BJ (cell line): ENCODE measurements at regions of chr2 and their contacts with region 1.

Region 1: GRCh38 chr2:74334931-74335333 is 8.3 kb downstream of the SLC4A5 start:
- DNase-seq: peak; percentile 20
- H3K4me3 ChIP-seq: no peak overlapping the region
- H3K27me3 ChIP-seq: no peaks in the 10 kb centered on the region
- CTCF ChIP-seq: peak; percentile 98

Region 2: GRCh38 chr2:73892631-73893329 is 442.2 kb before region 1 on chr2 and contains the start of gene ACTG2:
- CTCF ChIA-PET with region 1: no interaction called
- POLR2A ChIA-PET with region 1: no interaction called
- DNase-seq: no peak
- H3K4me3 ChIP-seq: no peak within 1 kb of the TSS
- H3K27me3 ChIP-seq: peaks cover 16% of the 10 kb centered on the region
- CTCF ChIP-seq: no peak
- polyA plus RNA-seq, gene ACTG2: 43.8 and 81.3 TPM in 2 replicates

Region 3: DNA sequence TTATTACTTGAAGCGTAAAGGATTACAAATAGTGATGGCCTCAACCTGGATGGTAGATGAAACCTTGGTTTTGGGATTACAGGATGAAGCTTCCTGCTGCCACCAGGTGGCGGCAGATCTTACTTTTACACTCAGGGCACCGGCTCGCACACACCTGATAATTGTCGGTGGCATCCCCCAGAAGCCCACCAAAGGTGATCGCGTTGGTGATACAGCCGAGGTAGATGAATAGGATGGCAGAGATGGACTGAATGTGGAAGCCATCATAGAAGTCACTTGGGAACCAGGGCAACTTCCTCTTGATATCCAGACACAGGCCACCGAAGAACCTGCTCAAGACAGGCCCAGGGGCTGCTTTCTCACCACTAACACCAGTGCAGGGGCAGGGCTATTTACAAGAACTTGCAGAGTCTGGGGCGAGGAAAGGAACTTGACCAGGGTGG is 84.7 kb before region 1 on chr2:
- CTCF ChIA-PET with region 1: interaction called, 20 read pairs
- POLR2A ChIA-PET with region 1: no interaction called
- DNase-seq: no peak
- H3K4me3 ChIP-seq: no peak overlapping the region
- H3K27me3 ChIP-seq: peaks cover 7% of the 10 kb centered on the region; the same call in 1 of the 2 replicates
- CTCF ChIP-seq: peak; percentile 81

Region 4: GRCh38 chr2:74317701-74318301 is 17.1 kb before region 1 on chr2:
- CTCF ChIA-PET with region 1: interaction called, 43 read pairs
- POLR2A ChIA-PET with region 1: interaction called, 4 read pairs
- DNase-seq: no peak
- H3K4me3 ChIP-seq: no peak overlapping the region
- H3K27me3 ChIP-seq: no peaks in the 10 kb centered on the region; the same call in 1 of the 2 replicates
- CTCF ChIP-seq: no peak

Region 5: DNA sequence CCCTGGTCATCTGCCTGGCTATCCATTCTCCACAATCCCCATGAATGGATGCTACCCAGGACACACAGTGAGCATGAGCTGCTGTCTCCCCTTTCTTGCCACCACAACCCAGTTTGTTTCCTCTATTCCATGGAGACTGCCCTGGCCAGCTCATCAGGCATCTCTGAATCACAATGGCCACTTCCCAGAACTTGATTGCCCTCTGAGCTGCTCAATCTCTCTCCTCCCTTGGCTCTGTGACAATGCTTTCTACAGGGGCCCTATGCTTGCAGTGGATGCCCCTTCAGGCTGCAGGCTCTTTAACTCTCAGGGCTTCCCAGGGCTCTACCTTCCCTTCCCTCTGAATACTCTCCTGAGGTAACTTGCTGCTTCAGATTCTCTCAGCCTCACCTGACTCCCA is 22.7 kb after region 1 on chr2:
- CTCF ChIA-PET with region 1: interaction called, 10 read pairs
- POLR2A ChIA-PET with region 1: no interaction called
- DNase-seq: no peak
- H3K4me3 ChIP-seq: no peak overlapping the region
- H3K27me3 ChIP-seq: no peaks in the 10 kb centered on the region
- CTCF ChIP-seq: no peak

Region 6: DNA sequence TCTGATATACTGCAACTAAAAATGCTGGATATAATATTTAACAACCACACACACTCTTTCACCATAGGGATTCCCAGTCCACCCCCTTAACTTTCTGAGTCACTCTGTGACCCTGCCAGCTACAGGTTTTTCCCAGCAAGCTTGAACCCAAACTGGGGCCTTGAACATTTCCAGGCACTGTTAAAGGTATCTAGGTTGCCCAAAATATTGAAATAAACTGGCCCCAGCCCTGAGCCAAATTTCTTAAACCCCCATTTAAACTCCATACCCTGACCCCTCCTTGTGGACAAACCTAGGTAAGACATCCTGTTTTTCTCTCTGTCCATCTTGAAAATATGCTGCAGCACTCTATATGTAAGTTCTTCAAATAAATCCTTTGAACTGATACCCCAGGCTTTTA is 64.9 kb after region 1 on chr2:
- CTCF ChIA-PET with region 1: interaction called, 19 read pairs
- POLR2A ChIA-PET with region 1: no interaction called
- DNase-seq: no peak
- H3K4me3 ChIP-seq: no peak overlapping the region
- H3K27me3 ChIP-seq: no peaks in the 10 kb centered on the region
- CTCF ChIP-seq: peak; percentile 64